Panc1 (cell line): ENCODE measurements at regions of chr10 and their contacts with region 1.

Region 1: DNA sequence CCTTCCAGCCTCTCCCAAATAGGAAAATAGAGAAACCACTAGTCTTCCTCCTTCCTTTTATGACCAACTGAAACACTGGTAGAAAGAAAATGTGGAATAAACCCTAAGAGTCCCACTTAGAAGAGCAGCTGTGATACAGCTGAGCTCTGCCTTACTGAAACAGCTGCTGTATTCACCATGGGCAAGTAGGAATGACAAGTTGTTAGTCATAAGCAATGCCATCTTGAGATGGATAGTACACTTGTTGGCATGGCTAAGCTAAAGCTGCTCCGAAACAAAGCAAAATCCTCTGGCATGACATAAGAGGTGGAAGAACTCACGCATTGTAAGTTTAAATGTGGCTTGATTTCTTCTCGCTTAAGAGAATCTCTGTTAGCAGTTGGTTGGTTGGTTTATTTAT is 48.3 kb upstream of the TMEM236 start:
- DNase-seq: no peak
- ATAC-seq: no peak
- H3K4me3 ChIP-seq: no peak overlapping the region
- H3K27ac ChIP-seq: no peak overlapping the region
- H3K4me1 ChIP-seq: no peaks in the 10 kb centered on the region
- H3K27me3 ChIP-seq: no peaks in the 10 kb centered on the region
- CTCF ChIP-seq: no peak

Region 2: GRCh38 chr10:17504547-17505245 is 199.0 kb before region 1 on chr10:
- CTCF ChIA-PET with region 1: no interaction called
- POLR2A ChIA-PET with region 1: no interaction called
- in situ Hi-C with region 1: no loop called
- intact Hi-C with region 1: no loop called
- DNase-seq: no peak
- ATAC-seq: 0 out of 2 replicates have a peak, but pooled peaks have one; percentile 53
- H3K4me3 ChIP-seq: no peak overlapping the region
- H3K27ac ChIP-seq: no peak overlapping the region; the same call in 1 of the 2 replicates
- H3K4me1 ChIP-seq: peaks cover 4% of the 10 kb centered on the region; the same call in 1 of the 2 replicates
- H3K27me3 ChIP-seq: no peaks in the 10 kb centered on the region
- CTCF ChIP-seq: no peak

Region 3: DNA sequence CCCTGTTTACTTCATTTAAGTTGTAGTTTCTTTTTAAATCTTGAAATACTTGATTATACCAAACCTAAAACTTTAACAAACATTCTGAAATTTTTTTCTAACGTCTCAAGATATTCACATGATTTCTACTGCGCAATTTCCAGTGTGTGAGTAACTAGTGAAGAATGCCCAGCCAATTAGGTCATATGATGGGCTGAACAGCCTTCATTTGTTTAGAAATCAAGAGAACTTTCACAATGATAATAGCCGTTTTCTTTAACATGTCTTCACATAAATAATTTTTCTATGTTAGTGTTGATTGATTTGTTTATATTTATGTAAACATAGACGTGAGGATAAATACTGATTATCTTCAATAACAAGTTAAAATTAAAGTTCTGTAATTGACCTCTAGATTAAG is 38.0 kb before region 1 on chr10:
- CTCF ChIA-PET with region 1: no interaction called
- POLR2A ChIA-PET with region 1: interaction called, 15 read pairs
- in situ Hi-C with region 1: no loop called
- intact Hi-C with region 1: no loop called
- DNase-seq: peak; percentile 56
- ATAC-seq: no peak
- H3K4me3 ChIP-seq: no peak overlapping the region
- H3K27ac ChIP-seq: peak overlapping the region; percentile 29; the same call in 1 of the 2 replicates
- H3K4me1 ChIP-seq: peaks cover 7% of the 10 kb centered on the region
- H3K27me3 ChIP-seq: no peaks in the 10 kb centered on the region
- CTCF ChIP-seq: no peak